ENCODE measurements at regions of chr15 and their contacts with region 1.

Region 1: GRCh38 chr15:39920510-39921273 is 626 bp upstream of the GPR176 start:
- DNase-seq: peak; percentile 91

Region 2: DNA sequence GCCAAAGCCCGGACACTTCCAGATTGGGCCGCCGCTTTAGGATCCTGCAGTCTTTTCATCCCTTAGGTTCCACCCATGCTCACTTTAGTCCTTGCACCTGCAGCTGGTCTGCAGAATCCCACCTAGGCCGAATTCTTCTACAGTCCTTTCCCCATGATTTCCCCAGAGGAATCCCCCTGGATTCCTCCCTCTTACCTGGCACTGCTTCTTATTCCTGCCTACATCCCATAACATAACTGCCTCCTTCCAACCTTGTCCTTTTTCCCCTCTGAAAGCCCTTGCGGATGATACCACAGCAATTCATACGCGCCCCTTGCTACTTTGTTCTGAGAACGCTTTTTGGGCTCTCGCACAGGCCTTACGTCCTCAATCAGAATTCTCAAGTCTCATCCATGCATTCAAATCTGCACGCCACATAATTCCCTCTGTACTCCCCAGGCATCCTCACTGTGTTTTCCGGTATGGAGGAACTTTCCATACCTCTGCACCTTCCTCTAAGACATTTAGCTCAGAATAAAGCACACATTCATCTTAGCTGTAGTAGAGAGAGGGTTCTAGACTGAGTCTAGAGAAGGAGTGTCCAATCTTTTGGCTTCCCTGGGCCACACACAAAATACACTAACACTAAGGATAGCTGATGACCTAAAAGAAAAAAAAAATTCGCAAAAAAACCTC is 13.8 kb after region 1 on chr15:
- intact Hi-C with region 1: loop called (anchors 1 kb)
- DNase-seq: no peak

Measured in cardiac septum (tissue), 1 donor.